ENCODE measurements at regions of chr11 and their contacts with region 1.

Region 1: GRCh38 chr11:34051349-34052035 is at the start of gene CAPRIN1:
- DNase-seq: peak; percentile 88
- ATAC-seq: peak; percentile 79
- H3K4me3 Mint-ChIP-seq: peak within 1 kb of the TSS; percentile 97
- H3K27ac Mint-ChIP-seq: peak within 1 kb of the TSS; percentile 99
- H3K4me1 Mint-ChIP-seq: peaks cover 15% of the 10 kb centered on the region
- H3K27me3 Mint-ChIP-seq: no peaks in the 10 kb centered on the region
- CTCF ChIP-seq: no peak
- total RNA-seq, gene CAPRIN1: 297 to 328 TPM

Region 2: DNA sequence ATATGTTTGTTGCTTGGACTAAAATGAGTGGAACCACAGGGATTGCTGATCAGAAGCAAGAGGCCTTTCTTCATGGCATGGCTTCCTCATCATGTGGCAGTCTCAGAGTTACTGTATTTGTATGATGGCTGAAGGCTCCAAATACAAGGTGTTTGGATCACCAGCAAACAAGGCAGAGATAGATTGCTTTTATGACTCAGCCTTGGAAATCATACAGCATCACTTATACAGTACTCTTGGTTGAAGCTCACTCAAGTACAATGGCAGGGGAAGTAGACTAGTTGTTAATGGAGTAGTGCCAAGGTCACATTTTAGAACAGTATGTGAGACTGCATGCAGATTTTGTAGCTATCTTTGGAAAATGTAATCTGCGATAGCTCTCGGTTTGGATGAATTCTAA is 16.6 kb after region 1 on chr11:
- CTCF ChIA-PET with region 1: interaction called, 3 read pairs
- POLR2A ChIA-PET with region 1: interaction called, 17 read pairs
- intact Hi-C with region 1: no loop called
- DNase-seq: no peak
- ATAC-seq: no peak
- H3K4me3 Mint-ChIP-seq: no peak overlapping the region
- H3K27ac Mint-ChIP-seq: peak overlapping the region; percentile 41
- H3K4me1 Mint-ChIP-seq: peaks cover 64% of the 10 kb centered on the region
- H3K27me3 Mint-ChIP-seq: no peaks in the 10 kb centered on the region
- CTCF ChIP-seq: no peak

Region 3: GRCh38 chr11:34075178-34075820 is 23.8 kb after region 1 on chr11:
- CTCF ChIA-PET with region 1: no interaction called
- POLR2A ChIA-PET with region 1: interaction called, 17 read pairs
- intact Hi-C with region 1: no loop called
- DNase-seq: no peak
- ATAC-seq: no peak
- H3K4me3 Mint-ChIP-seq: no peak overlapping the region
- H3K27ac Mint-ChIP-seq: peak overlapping the region; percentile 67
- H3K4me1 Mint-ChIP-seq: peaks cover 41% of the 10 kb centered on the region
- H3K27me3 Mint-ChIP-seq: no peaks in the 10 kb centered on the region
- CTCF ChIP-seq: no peak

Measured in activated CD8-positive, alpha-beta T cell treated with anti-CD3 and anti-CD28 coated beads for 36 hours (primary cell).